Posterior cingulate gyrus (tissue), 11 donors: ENCODE measurements at regions of chr6 and their contacts with region 1.

Region 1: GRCh38 chr6:75284632-75285286 is at the start of gene TMEM30A:
- DNase-seq: peak; percentile 95 to 99 (median 97)

Region 2: DNA sequence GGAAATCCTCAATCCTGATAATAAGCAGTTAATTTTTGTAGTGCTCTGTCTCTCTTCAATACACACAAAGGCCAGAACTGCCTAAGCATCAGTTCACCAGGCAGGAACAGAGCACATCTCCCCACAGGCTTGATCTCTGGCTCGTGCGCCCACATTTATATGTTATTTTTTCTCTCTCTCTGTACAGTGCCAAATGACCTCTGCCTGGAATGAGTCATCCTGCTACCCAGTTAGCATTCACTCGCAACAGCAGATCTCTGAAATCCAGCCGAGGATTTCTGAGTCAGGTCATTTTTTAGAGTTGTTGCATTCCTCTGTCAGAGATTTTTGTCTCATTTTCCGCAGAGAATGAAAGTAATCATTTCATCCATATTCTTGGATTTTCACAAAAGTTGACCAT is 186.1 kb before region 1 on chr6:
- intact Hi-C with region 1: no loop called
- DNase-seq: no peak

Region 3: GRCh38 chr6:75243333-75244062 is 41.3 kb before region 1 on chr6 and contains the start of gene COX7A2:
- intact Hi-C with region 1: loop called (anchors 2 kb)
- DNase-seq: peak; percentile 86 to 99 (median 94)

Region 4: DNA sequence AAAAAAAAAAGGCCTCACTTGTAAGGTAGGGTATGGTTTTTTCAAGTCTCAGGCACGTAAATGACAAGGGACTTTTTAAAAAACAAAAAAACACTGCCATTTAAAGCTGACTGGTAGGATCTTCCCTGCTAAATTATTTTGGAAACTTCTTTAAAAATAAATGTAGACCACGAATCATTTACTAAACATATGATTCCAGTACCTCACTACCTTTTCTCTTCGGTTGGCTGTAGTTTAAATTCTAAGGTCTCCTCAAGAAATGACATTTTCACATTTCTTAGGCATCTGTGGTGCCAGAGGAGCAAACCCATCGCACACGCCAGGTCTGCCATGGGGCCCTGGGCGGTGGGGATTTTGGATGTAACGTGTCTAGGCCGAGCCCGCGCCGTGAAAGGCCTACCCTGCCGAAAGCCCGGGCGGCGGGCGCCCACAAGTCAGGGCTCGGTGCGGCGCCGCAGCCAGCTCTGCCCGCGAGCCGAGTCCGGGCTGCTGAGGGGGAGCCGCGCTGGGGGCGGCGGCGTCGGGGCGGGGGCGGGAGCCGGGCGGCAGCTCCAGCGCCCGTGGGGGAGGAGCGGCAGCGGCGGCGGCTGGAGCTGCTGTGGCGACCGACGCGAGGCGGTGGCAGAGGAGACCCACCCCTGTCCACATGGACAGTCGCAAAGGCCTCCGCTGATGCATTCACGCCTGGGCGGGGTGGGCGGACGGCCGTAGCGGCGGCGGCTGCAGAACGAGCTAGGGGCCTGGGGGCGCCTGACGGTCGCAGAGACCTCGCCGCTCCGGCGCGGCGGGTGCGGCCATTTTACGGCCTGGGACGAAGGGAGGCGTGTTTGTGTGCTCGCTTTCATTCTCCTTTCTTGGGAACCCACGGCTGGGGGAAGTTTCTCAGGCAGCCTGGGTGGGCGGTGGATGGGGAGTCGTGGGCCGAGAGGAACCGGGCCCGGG is 316.8 kb after region 1 on chr6 and contains the start of gene SENP6:
- intact Hi-C with region 1: loop called (anchors 5 kb)
- DNase-seq: peak; percentile 66 to 97 (median 74)